Ovary (tissue), 10 donors: ENCODE measurements at regions of chr12 and their contacts with region 1.

Region 1: GRCh38 chr12:64696080-64696741 is 63.0 kb downstream of the GNS start:
- DNase-seq: no peak
- H3K4me3 ChIP-seq: no peak overlapping the region
- H3K27ac ChIP-seq: no peak overlapping the region
- H3K4me1 ChIP-seq: no peaks in the 10 kb centered on the region
- H3K27me3 ChIP-seq: no peaks in the 10 kb centered on the region
- CTCF ChIP-seq: peak; percentile 19 to 63 (median 22)
- EP300 ChIP-seq: no peak
- POLR2A ChIP-seq: no peak

Region 2: GRCh38 chr12:64544371-64545080 is 151.7 kb before region 1 on chr12:
- intact Hi-C with region 1: loop called in 2 of 4 experiments (anchors 2 to 5 kb)
- DNase-seq: no peak
- H3K4me3 ChIP-seq: no peak overlapping the region
- H3K27ac ChIP-seq: no peak overlapping the region
- H3K4me1 ChIP-seq: peaks cover 2% of the 10 kb centered on the region
- H3K27me3 ChIP-seq: no peaks in the 10 kb centered on the region
- CTCF ChIP-seq: no peak
- EP300 ChIP-seq: no peak
- POLR2A ChIP-seq: no peak

Region 3: DNA sequence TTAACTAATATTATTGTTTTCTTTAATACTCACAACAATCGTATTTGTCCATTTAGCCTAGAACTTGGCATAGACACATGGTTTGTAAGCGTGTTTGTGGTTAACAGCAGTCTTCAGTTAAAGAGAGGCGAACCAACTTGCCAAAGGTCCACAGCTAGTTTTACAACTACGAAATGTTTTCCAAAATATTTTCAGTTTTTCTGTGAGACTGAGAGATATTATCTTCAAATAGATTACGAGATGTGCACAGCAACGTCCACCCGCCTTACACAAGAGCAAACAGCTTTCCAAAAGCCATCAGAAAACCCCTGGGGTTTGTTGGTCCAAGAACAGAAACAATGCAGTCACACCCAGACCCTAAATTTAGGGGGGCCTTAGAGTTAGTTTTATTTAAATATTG is 144.5 kb before region 1 on chr12:
- intact Hi-C with region 1: loop called (anchors 2 to 5 kb)
- DNase-seq: no peak
- H3K4me3 ChIP-seq: no peak overlapping the region
- H3K27ac ChIP-seq: peak overlapping the region in 1 of 2 donors; percentile 37
- H3K4me1 ChIP-seq: peaks cover 2% of the 10 kb centered on the region
- H3K27me3 ChIP-seq: no peaks in the 10 kb centered on the region
- CTCF ChIP-seq: no peak
- EP300 ChIP-seq: no peak
- POLR2A ChIP-seq: no peak

Region 4: DNA sequence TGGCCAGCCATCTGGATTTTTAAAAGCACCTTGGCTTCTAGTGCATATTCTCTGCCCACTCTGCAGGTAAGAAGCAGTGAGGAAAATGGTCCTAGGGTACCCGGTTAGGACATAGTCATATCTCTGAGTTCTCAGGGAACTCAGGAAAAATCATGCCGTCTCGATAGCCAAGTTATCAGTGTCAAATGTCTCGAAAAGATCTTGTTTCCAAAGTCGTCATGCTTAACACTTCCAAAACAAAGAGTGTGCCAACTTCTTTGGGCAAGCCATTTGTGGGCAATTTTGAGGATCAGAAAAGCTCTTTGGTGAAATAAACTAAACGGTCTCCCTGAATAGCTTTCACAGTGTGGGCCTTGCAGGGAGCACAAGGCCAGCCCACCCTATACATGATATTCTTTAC is 46.7 kb before region 1 on chr12:
- intact Hi-C with region 1: no loop called
- DNase-seq: no peak
- H3K4me3 ChIP-seq: no peak overlapping the region
- H3K27ac ChIP-seq: no peak overlapping the region
- H3K4me1 ChIP-seq: peaks cover 1% of the 10 kb centered on the region
- H3K27me3 ChIP-seq: no peaks in the 10 kb centered on the region
- CTCF ChIP-seq: no peak
- EP300 ChIP-seq: no peak
- POLR2A ChIP-seq: no peak